AG04450 (cell line): ENCODE measurements at regions of chr7 and their contacts with region 1.

Region 1: GRCh38 chr7:140176811-140177702 is at the start of gene KDM7A:
- DNase-seq: peak; percentile 78
- H3K4me3 ChIP-seq: peak within 1 kb of the TSS; percentile 84
- H3K27ac ChIP-seq: peak within 1 kb of the TSS; percentile 92
- H3K27me3 ChIP-seq: peaks cover 10% of the 10 kb centered on the region
- CTCF ChIP-seq: no peak
- polyA plus RNA-seq, gene KDM7A: 3.7 and 3.8 TPM in 2 replicates

Region 2: DNA sequence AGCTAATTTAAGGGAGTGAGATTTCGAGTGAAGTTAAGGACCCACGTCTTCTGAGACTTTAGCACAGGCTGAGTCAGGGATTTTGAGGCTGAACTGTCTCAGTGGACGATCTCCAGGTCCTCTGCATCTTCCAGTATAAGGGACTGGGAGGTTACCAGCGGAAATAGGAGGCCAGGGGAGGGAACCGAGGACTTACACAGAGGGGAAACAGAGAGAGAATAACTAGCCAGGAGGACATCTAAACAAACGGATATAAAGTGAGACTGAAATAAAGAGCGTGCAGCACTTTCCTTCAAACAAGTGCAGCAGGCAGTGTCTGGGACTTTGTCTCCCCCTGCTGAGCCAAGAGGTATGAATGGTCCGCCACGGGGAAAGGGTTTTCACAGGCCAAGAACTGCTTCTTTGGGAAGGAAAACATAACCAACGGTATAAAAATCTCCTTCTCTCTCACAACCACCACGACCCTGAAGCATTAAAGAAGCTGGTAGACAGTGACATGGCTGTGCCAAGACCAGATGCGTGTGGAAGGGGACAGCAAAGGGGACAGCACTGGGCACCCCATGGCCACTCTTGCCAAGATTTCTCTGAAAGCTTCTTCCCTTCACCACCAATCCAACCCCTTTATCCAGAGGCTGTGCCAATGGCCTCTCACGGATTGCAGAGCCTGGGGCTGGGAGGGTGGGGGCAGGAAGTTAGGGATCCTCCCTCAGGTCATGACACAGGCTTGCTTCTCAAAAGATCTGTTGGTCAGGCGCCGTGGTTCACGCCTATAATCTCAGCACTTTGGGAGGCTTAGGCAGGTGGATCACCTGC is 149.3 kb after region 1 on chr7:
- CTCF ChIA-PET with region 1: interaction called, 16 read pairs
- POLR2A ChIA-PET with region 1: no interaction called
- DNase-seq: peak; percentile 39
- H3K4me3 ChIP-seq: peak overlapping the region; percentile 31; the same call in 1 of the 2 replicates
- H3K27ac ChIP-seq: peak overlapping the region; percentile 11
- H3K27me3 ChIP-seq: no peaks in the 10 kb centered on the region
- CTCF ChIP-seq: peak; percentile 92

Region 3: GRCh38 chr7:140417456-140418155 is 240.5 kb after region 1 on chr7:
- CTCF ChIA-PET with region 1: no interaction called
- POLR2A ChIA-PET with region 1: no interaction called
- DNase-seq: no peak
- H3K4me3 ChIP-seq: no peak overlapping the region
- H3K27ac ChIP-seq: no peak overlapping the region
- H3K27me3 ChIP-seq: peaks cover 12% of the 10 kb centered on the region
- CTCF ChIP-seq: no peak